IMR-90 (cell line): ENCODE measurements at regions of chr3 and their contacts with region 1.

Region 1: GRCh38 chr3:79361748-79362378 is 405.9 kb downstream of the ROBO1 start:
- DNase-seq: peak; percentile 58
- ATAC-seq: peak; percentile 73
- H3K4me3 ChIP-seq: no peak overlapping the region
- H3K27ac ChIP-seq: no peak overlapping the region
- H3K4me1 ChIP-seq: 0 out of 2 replicates have a peak, but pooled peaks cover 3% of the 10 kb centered on the region
- H3K27me3 ChIP-seq: no peaks in the 10 kb centered on the region
- CTCF ChIP-seq: peak; percentile 85
- POLR2A ChIP-seq: 0 out of 2 replicates have a peak, but pooled peaks have one; percentile 30
- RAD21 ChIP-seq: peak; percentile 89

Region 2: GRCh38 chr3:78666470-78666800 is 695.4 kb before region 1 on chr3:
- CTCF ChIA-PET with region 1: no interaction called
- POLR2A ChIA-PET with region 1: no interaction called
- dilution Hi-C with region 1: no loop called
- in situ Hi-C with region 1: loop called (anchors 10 kb)
- intact Hi-C with region 1: no loop called
- DNase-seq: peak; percentile 63
- ATAC-seq: peak; percentile 76; the same call in 1 of the 2 replicates
- H3K4me3 ChIP-seq: no peak overlapping the region
- H3K27ac ChIP-seq: no peak overlapping the region
- H3K4me1 ChIP-seq: peaks cover 1% of the 10 kb centered on the region; the same call in 1 of the 2 replicates
- H3K27me3 ChIP-seq: no peaks in the 10 kb centered on the region
- CTCF ChIP-seq: no peak
- POLR2A ChIP-seq: no peak
- RAD21 ChIP-seq: no peak

Region 3: GRCh38 chr3:79019137-79019923 is 342.5 kb before region 1 on chr3:
- CTCF ChIA-PET with region 1: interaction called, 6 read pairs
- POLR2A ChIA-PET with region 1: interaction called, 3 read pairs
- dilution Hi-C with region 1: no loop called
- in situ Hi-C with region 1: no loop called
- intact Hi-C with region 1: loop called (anchors 5 kb)
- DNase-seq: peak; percentile 93
- ATAC-seq: peak; percentile 83
- H3K4me3 ChIP-seq: peak overlapping the region; percentile 65
- H3K27ac ChIP-seq: peak overlapping the region; percentile 97
- H3K4me1 ChIP-seq: peaks cover 1% of the 10 kb centered on the region; the same call in 1 of the 2 replicates
- H3K27me3 ChIP-seq: no peaks in the 10 kb centered on the region
- CTCF ChIP-seq: no peak
- POLR2A ChIP-seq: peak; percentile 94
- RAD21 ChIP-seq: 0 out of 2 replicates have a peak, but pooled peaks have one; percentile 10

Region 4: GRCh38 chr3:79032686-79033318 is 329.1 kb before region 1 on chr3:
- CTCF ChIA-PET with region 1: interaction called, 3 read pairs
- POLR2A ChIA-PET with region 1: no interaction called
- dilution Hi-C with region 1: no loop called
- in situ Hi-C with region 1: no loop called
- intact Hi-C with region 1: loop called (anchors 2 kb)
- DNase-seq: peak; percentile 67
- ATAC-seq: peak; percentile 52; the same call in 1 of the 2 replicates
- H3K4me3 ChIP-seq: no peak overlapping the region
- H3K27ac ChIP-seq: no peak overlapping the region
- H3K4me1 ChIP-seq: peaks cover 2% of the 10 kb centered on the region; the same call in 1 of the 2 replicates
- H3K27me3 ChIP-seq: no peaks in the 10 kb centered on the region
- CTCF ChIP-seq: peak; percentile 69
- POLR2A ChIP-seq: no peak
- RAD21 ChIP-seq: peak; percentile 79

Region 5: DNA sequence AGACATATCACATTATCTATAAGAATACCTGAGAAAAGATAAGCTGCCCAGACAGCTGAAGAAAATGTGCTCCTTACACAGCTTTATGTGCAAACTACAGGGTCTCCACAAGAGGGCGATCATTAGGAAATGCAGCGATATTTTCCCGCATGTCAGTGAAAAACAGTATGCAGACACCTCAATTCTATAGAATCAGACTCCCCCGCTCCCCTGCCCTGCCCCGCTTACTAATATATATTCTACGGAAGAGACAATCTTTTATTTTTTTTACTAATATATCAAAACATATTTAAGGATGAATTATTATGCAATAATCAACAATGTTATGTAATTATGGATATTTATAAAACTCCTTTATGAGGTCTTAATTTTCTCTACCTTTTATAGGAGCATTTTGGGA is 275.3 kb before region 1 on chr3:
- CTCF ChIA-PET with region 1: interaction called, 21 read pairs
- POLR2A ChIA-PET with region 1: no interaction called
- dilution Hi-C with region 1: no loop called
- in situ Hi-C with region 1: no loop called
- intact Hi-C with region 1: loop called (anchors 1 kb)
- DNase-seq: peak; percentile 63
- ATAC-seq: peak; percentile 63
- H3K4me3 ChIP-seq: no peak overlapping the region
- H3K27ac ChIP-seq: no peak overlapping the region
- H3K4me1 ChIP-seq: peaks cover 3% of the 10 kb centered on the region; the same call in 1 of the 2 replicates
- H3K27me3 ChIP-seq: no peaks in the 10 kb centered on the region
- CTCF ChIP-seq: peak; percentile 76
- POLR2A ChIP-seq: no peak
- RAD21 ChIP-seq: peak; percentile 71

Region 6: GRCh38 chr3:79097964-79098660 is 263.8 kb before region 1 on chr3:
- CTCF ChIA-PET with region 1: no interaction called
- POLR2A ChIA-PET with region 1: no interaction called
- dilution Hi-C with region 1: no loop called
- in situ Hi-C with region 1: loop called (anchors 5 kb)
- intact Hi-C with region 1: no loop called
- DNase-seq: no peak
- ATAC-seq: 0 out of 2 replicates have a peak, but pooled peaks have one; percentile 14
- H3K4me3 ChIP-seq: no peak overlapping the region
- H3K27ac ChIP-seq: no peak overlapping the region
- H3K4me1 ChIP-seq: no peaks in the 10 kb centered on the region
- H3K27me3 ChIP-seq: no peaks in the 10 kb centered on the region
- CTCF ChIP-seq: no peak
- POLR2A ChIP-seq: no peak
- RAD21 ChIP-seq: no peak

Region 7: GRCh38 chr3:79167651-79168416 is 194.0 kb before region 1 on chr3:
- CTCF ChIA-PET with region 1: no interaction called
- POLR2A ChIA-PET with region 1: no interaction called
- dilution Hi-C with region 1: no loop called
- in situ Hi-C with region 1: no loop called
- intact Hi-C with region 1: loop called (anchors 5 kb)
- DNase-seq: peak; percentile 97
- ATAC-seq: peak; percentile 94
- H3K4me3 ChIP-seq: no peak overlapping the region
- H3K27ac ChIP-seq: no peak overlapping the region
- H3K4me1 ChIP-seq: peaks cover 1% of the 10 kb centered on the region; the same call in 1 of the 2 replicates
- H3K27me3 ChIP-seq: no peaks in the 10 kb centered on the region
- CTCF ChIP-seq: no peak
- POLR2A ChIP-seq: no peak
- RAD21 ChIP-seq: no peak

Region 8: GRCh38 chr3:79661896-79662295 is 300.0 kb after region 1 on chr3:
- CTCF ChIA-PET with region 1: no interaction called
- POLR2A ChIA-PET with region 1: no interaction called
- dilution Hi-C with region 1: no loop called
- in situ Hi-C with region 1: no loop called
- intact Hi-C with region 1: no loop called
- DNase-seq: no peak
- ATAC-seq: no peak
- H3K4me3 ChIP-seq: no peak overlapping the region
- H3K27ac ChIP-seq: no peak overlapping the region
- H3K4me1 ChIP-seq: no peaks in the 10 kb centered on the region
- H3K27me3 ChIP-seq: no peaks in the 10 kb centered on the region
- CTCF ChIP-seq: no peak
- POLR2A ChIP-seq: no peak
- RAD21 ChIP-seq: no peak